ENCODE measurements at regions of chr19 and their contacts with region 1.

Region 1: DNA sequence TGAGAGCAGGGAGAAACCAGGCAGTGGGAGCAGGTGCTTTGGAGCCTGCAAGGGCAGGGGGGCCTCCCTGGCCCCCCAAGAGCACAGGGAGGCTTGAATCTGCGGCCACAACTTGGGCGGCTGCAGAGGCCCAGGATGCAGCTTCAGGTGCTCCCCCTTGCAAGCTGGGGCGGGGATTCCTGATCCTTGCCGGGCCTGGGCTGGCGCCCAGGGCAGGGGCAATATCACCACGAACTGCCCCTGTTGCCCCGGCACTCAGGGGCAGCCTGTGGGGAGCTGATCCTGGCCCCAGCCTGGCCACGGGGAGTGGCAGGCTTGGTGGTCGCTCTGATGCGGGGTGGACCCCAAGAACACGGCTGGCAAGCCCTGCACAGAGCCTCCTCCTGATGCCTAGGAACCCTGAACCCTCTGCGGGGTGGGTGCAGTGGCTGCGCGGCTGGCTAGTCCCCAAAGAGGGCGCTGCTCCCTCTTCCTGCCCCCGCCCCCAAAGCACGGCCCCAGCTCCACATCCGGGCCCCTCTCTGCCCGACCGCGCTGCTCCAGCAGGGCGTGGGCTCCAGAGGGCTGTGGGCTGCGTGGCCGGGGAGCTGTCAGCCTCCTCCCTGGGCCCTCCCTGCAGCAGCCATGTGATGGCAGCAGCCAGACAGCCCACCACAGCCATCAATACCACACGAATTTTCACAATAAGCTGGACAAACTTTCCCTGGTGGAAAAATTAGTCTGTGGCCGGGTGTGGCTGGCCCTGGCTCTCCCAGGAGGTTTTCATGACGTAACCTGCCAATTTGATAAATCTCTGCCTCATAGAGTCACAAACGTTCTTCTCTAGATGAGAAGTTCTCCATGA is 21.0 kb downstream of the TNFSF9 start:
- DNase-seq: peak in 1 of 2 experiments; percentile 86
- H3K4me3 ChIP-seq: peak overlapping the region in 3 of 4 experiments; percentile 28 to 46 (median 38); a peak in 4 of 8 replicates
- H3K27ac ChIP-seq: no peak overlapping the region
- H3K4me1 ChIP-seq: peaks cover 0 to 5% (median 3%) of the 10 kb centered on the region in 4 experiments; a peak in 4 of 7 replicates
- H3K27me3 ChIP-seq: no peaks in the 10 kb centered on the region
- CTCF ChIP-seq: peak; percentile 68 to 84 (median 70)
- EP300 ChIP-seq: no peak; a peak in 1 of 3 replicates
- POLR2A ChIP-seq: no peak
- RAD21 ChIP-seq: peak; percentile 23 to 48; a peak in 2 of 4 replicates

Region 2: DNA sequence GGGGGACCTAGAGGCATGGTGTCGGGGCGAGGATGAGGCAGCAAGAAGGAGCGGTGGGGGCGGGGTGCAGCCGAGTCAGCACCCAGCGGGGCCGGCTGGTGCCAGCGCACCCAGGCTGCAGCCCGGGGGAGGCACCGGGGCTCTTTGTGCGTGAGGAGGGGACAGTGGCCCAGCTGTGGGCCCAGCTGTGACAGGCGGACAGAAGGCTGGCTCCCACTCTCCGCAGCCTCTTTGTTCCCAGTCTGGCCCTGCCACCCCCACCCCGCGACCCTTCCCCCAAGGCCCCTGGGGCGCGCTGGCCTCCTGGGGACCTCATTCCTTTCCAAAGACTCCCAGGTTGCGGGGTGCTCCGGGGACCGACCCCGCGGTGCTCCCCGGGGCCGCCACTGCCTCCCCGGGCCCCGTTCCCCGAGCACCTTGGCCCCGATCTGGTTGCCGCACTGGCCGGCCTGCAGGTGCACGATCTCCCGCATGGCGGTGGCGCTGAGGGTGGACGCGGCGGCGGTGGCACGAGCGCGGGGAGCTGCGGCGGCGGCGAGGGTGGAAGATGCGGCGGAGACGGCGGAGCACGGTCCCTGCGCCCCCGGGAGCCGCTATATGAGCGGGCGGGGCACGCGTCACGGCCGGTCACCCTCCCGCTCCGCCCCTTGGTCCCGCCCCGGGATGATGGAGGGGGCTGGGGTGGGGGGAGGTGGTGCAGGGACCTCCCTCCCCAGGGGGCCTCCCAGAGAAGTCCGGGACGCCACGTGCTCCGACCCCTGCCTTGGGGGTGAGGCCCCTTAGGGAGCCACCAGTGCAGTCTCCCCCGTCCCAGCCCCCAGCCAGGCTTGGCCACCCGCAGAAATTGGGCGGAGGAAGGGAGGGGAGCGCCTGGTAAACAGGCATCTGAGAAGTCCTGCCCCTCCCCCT is 49.8 kb before region 1 on chr19 and contains the start of gene TUBB4A:
- CTCF ChIA-PET with region 1: no interaction called
- POLR2A ChIA-PET with region 1: no interaction called
- DNase-seq: peak in 1 of 2 experiments; percentile 75
- H3K4me3 ChIP-seq: peak within 1 kb of the TSS; percentile 44 to 86 (median 59)
- H3K27ac ChIP-seq: no peak within 1 kb of the TSS
- H3K4me1 ChIP-seq: peaks cover 0 to 10% (median 7%) of the 10 kb centered on the region in 4 experiments; a peak in 5 of 7 replicates
- H3K27me3 ChIP-seq: peaks cover 0 to 8% (median 7%) of the 10 kb centered on the region in 4 experiments; a peak in 4 of 7 replicates
- CTCF ChIP-seq: no peak
- EP300 ChIP-seq: no peak
- POLR2A ChIP-seq: no peak
- RAD21 ChIP-seq: no peak
- total RNA-seq, gene TUBB4A: 21.2 and 30.4 TPM in 2 replicates

Region 3: DNA sequence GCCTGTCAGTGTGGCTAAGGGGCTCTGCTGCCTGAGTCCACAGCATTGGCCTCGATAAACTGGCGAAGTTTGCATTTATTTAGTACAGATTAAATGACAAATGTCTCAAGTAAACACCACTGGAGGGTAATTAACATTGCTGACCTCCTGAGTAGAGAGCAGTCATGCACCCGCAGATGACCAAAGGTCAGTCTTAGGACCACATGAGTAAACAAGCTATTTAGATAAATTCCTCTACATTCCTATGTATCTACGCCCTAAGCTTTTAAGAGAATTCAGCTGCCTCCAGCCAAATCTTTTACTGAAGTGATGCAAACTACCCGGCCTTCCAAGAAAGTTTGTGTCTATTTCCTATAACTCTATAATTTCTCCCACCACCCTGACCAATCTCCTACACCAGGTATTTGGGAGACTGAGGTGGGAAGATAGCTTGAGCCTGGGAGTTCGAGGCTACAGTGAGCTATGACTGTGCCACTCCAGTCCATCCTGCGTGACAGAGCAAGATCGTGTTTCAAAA is 16.2 kb after region 1 on chr19:
- CTCF ChIA-PET with region 1: interaction called, 11 read pairs
- POLR2A ChIA-PET with region 1: no interaction called
- DNase-seq: no peak
- H3K4me3 ChIP-seq: no peak overlapping the region
- H3K27ac ChIP-seq: no peak overlapping the region
- H3K4me1 ChIP-seq: no peaks in the 10 kb centered on the region; a peak in 1 of 7 replicates
- H3K27me3 ChIP-seq: no peaks in the 10 kb centered on the region
- CTCF ChIP-seq: no peak
- EP300 ChIP-seq: no peak
- POLR2A ChIP-seq: no peak
- RAD21 ChIP-seq: no peak

Measured in H1 (cell line).